Activated naive CD4-positive, alpha-beta T cell treated with anti-CD3 and anti-CD28 coated beads for 36 hours (primary cell): ENCODE measurements at regions of chr2 and their contacts with region 1.

Region 1: DNA sequence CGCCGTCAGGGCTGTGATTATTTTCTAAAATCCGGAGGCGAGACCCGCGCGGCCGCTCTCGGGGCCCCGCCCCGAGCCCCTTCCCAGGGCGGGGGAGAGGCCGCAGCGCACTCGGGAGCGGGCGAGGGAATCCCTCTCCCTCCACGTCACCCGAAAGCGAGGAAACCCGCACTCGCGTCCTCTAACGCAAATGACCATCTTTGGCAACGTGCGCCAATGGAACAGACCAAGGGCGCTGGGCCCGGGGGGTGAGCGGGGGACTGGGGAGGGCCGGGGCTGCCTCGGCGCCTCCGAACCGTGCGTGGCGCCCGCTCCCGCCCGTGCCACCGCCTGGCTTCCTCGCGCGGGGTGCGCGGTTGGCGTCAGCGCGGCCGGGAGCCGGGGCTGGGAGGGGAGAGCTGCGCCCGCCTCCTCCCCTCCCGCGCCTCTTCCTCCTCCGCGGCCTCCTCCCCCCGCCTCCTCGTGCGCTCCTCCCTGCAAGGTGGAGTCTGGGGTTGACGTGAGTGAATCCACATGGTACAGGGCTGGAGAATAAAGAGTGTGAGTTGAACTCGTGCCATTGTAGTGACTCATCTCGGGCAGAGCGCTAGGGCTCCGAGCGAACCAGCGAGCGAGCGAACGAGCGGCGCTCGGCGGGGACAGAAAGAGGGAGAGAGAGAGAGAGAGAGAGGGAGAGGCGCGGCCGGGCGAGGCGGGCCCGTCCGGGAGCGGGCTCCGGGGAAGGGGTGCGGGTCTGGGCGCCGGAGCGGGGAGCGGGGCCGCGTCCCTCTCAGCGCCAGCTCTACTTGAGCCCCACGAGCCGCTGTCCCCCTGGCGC is at the start of gene FOSL2:
- DNase-seq: peak; percentile 97
- H3K4me3 Mint-ChIP-seq: peak within 1 kb of the TSS; percentile 94
- H3K27ac Mint-ChIP-seq: peak within 1 kb of the TSS; percentile 99
- H3K4me1 Mint-ChIP-seq: peaks cover 30% of the 10 kb centered on the region
- H3K27me3 Mint-ChIP-seq: no peaks in the 10 kb centered on the region
- total RNA-seq, gene FOSL2: 102 to 110 TPM

Region 2: DNA sequence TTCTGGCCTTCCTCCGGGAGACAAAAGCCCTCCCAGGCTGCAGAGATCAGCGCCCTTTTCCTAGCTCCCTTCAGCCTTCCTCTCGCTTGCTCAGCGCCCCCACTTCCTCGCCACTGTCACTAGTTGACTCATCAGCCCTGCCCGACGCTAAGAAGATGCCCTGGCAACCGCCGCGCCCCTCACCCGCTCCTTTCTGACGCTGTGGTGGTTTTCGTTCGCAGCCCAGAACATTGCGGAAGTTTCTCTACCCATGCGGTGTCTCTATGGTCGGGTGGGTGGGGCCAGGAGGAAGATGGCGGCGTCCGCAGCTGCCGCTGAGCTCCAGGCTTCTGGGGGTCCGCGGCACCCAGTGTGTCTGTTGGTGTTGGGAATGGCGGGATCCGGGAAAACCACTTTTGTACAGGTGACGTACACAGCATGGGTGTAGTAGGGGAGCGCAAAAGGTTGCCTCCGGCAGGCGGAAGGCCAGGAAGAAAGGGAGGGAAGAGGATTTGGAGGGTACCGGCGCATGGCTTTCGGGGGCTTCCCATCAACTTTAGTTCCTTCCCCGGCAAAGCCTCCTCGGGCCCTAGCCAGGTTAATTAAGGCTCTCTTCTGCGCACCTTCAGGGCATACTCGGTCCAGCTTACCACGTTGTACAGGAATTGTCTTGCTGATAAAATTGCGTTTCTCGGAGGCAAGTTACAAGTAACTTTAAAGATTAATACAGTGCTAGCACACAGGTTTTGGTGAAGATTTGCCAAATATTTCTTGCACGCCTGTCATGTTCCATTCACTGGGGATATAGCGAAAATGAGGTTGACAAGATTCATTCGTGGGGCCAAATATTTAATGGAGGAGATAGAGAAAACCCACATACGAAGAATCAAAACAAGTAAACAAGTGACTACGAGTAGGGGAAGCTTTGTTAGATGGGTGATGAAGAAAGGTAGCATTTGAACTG is 763.5 kb before region 1 on chr2 and contains the starts of genes CCDC121 and GPN1:
- CTCF ChIA-PET with region 1: no interaction called
- intact Hi-C with region 1: loop called (anchors 2 kb)
- DNase-seq: peak; percentile 98
- H3K4me3 Mint-ChIP-seq: no peak within 1 kb of the TSS
- H3K27ac Mint-ChIP-seq: peak within 1 kb of the TSS; percentile 52
- H3K4me1 Mint-ChIP-seq: peaks cover 13% of the 10 kb centered on the region
- H3K27me3 Mint-ChIP-seq: no peaks in the 10 kb centered on the region
- total RNA-seq, gene CCDC121: 0.17 to 0.30 TPM
- total RNA-seq, gene GPN1: 44.9 to 45.1 TPM

Region 3: DNA sequence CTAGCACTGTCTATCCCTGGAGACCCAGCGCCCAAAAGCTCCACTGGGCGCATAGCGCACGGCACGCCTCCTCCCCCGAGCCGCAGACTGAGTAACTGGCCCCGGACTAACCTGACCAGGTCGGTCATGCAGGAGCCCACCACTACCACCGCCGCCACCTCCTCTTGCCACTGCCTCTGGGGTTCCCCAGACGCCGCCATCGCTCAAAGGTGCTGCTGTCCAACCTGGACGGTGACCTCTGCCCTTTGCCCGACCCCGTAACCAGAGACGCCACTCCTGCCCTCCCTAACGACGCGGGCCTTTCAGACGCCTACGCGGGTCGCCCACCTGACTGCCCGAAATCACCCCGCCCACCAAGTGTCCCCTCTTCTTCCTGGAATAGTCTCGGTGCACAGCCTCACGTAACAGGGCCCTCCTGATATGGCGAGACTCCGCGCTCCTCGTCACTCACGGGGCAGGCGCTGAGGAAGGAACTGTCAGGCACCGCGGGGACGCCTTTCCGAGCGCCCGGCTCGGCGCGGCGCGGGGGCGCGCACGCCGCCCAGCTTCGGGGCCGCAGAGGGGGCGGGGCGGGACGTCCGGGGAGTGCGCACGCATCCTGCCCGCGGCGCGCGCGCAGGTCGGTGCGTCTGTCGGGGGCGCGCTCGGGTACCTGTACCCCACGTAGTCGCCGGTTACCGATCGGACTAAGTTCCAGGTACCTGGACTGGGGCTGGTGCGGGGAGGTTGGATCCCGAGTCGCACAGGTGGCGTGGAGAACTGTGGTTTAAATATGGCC is 502.2 kb before region 1 on chr2 and contains the starts of genes BABAM2 and RBKS:
- CTCF ChIA-PET with region 1: no interaction called
- intact Hi-C with region 1: loop called (anchors 1 kb)
- DNase-seq: peak; percentile 88
- H3K4me3 Mint-ChIP-seq: peak within 1 kb of the TSS; percentile 96
- H3K27ac Mint-ChIP-seq: peak within 1 kb of the TSS; percentile 97
- H3K4me1 Mint-ChIP-seq: peaks cover 47% of the 10 kb centered on the region
- H3K27me3 Mint-ChIP-seq: no peaks in the 10 kb centered on the region
- total RNA-seq, gene BABAM2: 41.8 to 47.2 TPM
- total RNA-seq, gene RBKS: 1.1 to 1.2 TPM

Region 4: DNA sequence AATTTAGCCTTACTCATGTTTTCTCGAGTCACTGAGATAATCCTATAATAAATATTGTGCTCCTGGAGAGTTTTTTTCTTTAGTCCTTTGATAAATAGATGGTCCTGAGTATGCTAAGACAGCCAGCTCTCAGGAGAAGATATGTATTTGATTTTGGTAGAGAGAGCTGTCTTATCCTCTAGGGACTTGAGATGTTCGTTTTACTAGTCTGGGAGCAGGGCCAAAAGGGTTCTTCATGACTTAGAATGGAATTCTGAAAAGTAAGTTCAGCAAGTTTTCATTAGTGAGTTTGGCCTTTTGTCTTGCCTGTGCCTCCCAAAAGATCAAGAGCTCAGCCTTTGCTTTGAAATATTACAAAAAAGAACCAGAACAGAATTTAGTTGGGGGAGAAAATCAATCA is 255.3 kb before region 1 on chr2:
- CTCF ChIA-PET with region 1: no interaction called
- intact Hi-C with region 1: no loop called
- DNase-seq: no peak
- H3K4me3 Mint-ChIP-seq: no peak overlapping the region
- H3K27ac Mint-ChIP-seq: no peak overlapping the region
- H3K4me1 Mint-ChIP-seq: peaks cover 10% of the 10 kb centered on the region
- H3K27me3 Mint-ChIP-seq: no peaks in the 10 kb centered on the region

Region 5: DNA sequence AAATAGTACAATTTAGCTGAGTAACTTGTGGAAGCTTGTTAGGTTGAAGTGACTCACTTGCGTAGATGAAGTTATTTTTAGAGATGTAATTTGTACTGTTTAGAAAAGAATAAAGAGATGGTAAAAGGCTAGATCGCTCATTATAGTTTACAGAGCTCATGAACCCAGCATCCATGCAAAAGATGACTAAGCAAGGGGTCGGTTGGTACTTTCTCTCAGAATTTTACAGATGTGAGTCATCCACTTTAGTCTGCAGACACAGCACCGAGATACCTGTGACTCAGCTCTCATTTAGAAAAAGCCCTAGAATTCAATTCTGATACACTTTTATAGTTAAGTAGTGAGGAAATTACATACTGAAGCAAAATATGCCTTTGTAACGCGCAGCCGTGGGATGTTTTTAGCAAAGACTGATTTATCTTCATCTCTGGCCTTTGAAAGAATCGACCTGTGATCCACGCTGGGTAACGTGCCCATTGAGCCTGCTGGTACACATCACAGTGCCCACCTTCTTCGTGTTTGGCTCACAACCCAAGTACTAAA is 116.4 kb before region 1 on chr2:
- CTCF ChIA-PET with region 1: no interaction called
- intact Hi-C with region 1: loop called (anchors 1 kb)
- DNase-seq: peak; percentile 56
- H3K4me3 Mint-ChIP-seq: no peak overlapping the region
- H3K27ac Mint-ChIP-seq: peak overlapping the region; percentile 38
- H3K4me1 Mint-ChIP-seq: peaks cover 35% of the 10 kb centered on the region
- H3K27me3 Mint-ChIP-seq: no peaks in the 10 kb centered on the region

Region 6: GRCh38 chr2:28406276-28407096 is 14.0 kb after region 1 on chr2:
- CTCF ChIA-PET with region 1: no interaction called
- intact Hi-C with region 1: loop called (anchors 1 kb)
- DNase-seq: peak; percentile 50
- H3K4me3 Mint-ChIP-seq: no peak overlapping the region
- H3K27ac Mint-ChIP-seq: peak overlapping the region; percentile 32
- H3K4me1 Mint-ChIP-seq: peaks cover 74% of the 10 kb centered on the region
- H3K27me3 Mint-ChIP-seq: no peaks in the 10 kb centered on the region

Region 7: GRCh38 chr2:28751252-28751955 is 358.9 kb after region 1 on chr2 and contains the start of gene PPP1CB:
- CTCF ChIA-PET with region 1: no interaction called
- intact Hi-C with region 1: loop called (anchors 2 kb)
- DNase-seq: peak; percentile 94
- H3K4me3 Mint-ChIP-seq: peak within 1 kb of the TSS; percentile 91
- H3K27ac Mint-ChIP-seq: peak within 1 kb of the TSS; percentile 95
- H3K4me1 Mint-ChIP-seq: peaks cover 50% of the 10 kb centered on the region
- H3K27me3 Mint-ChIP-seq: no peaks in the 10 kb centered on the region
- total RNA-seq, gene PPP1CB: 235 to 239 TPM

Region 8: GRCh38 chr2:29187926-29188325 is 795.4 kb after region 1 on chr2:
- CTCF ChIA-PET with region 1: no interaction called
- intact Hi-C with region 1: no loop called
- DNase-seq: no peak
- H3K4me3 Mint-ChIP-seq: no peak overlapping the region
- H3K27ac Mint-ChIP-seq: no peak overlapping the region
- H3K4me1 Mint-ChIP-seq: peaks cover 4% of the 10 kb centered on the region
- H3K27me3 Mint-ChIP-seq: no peaks in the 10 kb centered on the region